B cell (primary cell): ENCODE measurements at regions of chr14 and their contacts with region 1.

Region 1: DNA sequence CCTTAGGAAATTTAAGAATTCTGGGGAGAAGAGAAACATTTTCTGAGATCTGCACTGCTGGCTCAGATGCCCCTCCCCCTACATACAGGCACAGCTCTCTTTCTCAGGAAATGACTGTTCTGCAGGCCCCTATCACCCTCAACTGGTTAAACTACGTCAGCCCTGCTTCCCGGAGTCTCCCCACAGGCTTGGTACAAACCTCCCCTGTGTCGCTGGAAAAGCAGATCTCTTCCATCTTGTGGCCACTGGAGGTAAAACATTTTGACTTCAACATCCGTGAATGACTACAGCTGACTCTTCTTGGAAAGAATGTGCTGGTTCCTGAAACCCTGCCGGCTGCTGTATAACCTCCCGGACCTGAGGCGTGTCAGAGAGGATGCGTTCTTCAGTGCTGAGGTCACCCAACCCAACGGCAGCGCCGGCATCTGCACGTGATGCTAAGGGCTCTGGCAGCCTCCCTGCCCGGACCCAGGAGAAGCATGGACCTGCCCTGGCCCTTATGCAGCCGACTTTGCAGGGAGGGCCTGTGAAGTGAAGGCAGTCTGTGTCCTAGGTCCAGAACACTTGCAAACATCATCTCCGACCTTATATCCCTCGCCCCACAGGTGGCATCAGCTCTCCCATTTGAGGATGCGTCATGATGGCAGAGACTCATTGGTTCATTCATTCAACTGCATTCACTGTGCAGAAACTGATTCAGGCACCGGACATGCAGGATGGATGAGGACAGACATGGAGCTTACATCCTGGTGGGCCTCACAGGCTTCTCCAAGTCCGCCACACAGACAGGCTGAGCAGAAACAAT is 129.3 kb downstream of the GCH1 start:
- DNase-seq: peak; percentile 66
- ATAC-seq: peak; percentile 7
- H3K4me3 ChIP-seq: no peak overlapping the region
- H3K4me3 Mint-ChIP-seq: no peak overlapping the region
- H3K27ac ChIP-seq: peak overlapping the region in 1 of 2 donors; percentile 28
- H3K27ac Mint-ChIP-seq: peak overlapping the region; percentile 47
- H3K4me1 ChIP-seq: peaks cover 42% of the 10 kb centered on the region in 2 donors
- H3K4me1 Mint-ChIP-seq: peaks cover 35% of the 10 kb centered on the region
- H3K27me3 ChIP-seq: no peaks in the 10 kb centered on the region
- H3K27me3 Mint-ChIP-seq: no peaks in the 10 kb centered on the region
- CTCF ChIP-seq: no peak

Region 2: GRCh38 chr14:54396493-54397335 is 376.7 kb before region 1 on chr14 and contains the start of gene CDKN3:
- CTCF ChIA-PET with region 1: no interaction called
- POLR2A ChIA-PET with region 1: no interaction called
- intact Hi-C with region 1: loop called (anchors 10 kb)
- DNase-seq: peak; percentile 98
- ATAC-seq: peak; percentile 93
- H3K4me3 ChIP-seq: peak within 1 kb of the TSS; percentile 36 to 92 (median 75)
- H3K4me3 Mint-ChIP-seq: peak within 1 kb of the TSS; percentile 85
- H3K27ac ChIP-seq: no peak within 1 kb of the TSS
- H3K27ac Mint-ChIP-seq: peak within 1 kb of the TSS; percentile 70
- H3K4me1 ChIP-seq: peaks cover 0 to 13% of the 10 kb centered on the region in 2 donors
- H3K4me1 Mint-ChIP-seq: peaks cover 18% of the 10 kb centered on the region
- H3K27me3 ChIP-seq: no peaks in the 10 kb centered on the region
- H3K27me3 Mint-ChIP-seq: no peaks in the 10 kb centered on the region
- CTCF ChIP-seq: peak; percentile 48
- total RNA-seq, gene CDKN3: 0.42 and 0.87 TPM in 2 replicates

Region 3: DNA sequence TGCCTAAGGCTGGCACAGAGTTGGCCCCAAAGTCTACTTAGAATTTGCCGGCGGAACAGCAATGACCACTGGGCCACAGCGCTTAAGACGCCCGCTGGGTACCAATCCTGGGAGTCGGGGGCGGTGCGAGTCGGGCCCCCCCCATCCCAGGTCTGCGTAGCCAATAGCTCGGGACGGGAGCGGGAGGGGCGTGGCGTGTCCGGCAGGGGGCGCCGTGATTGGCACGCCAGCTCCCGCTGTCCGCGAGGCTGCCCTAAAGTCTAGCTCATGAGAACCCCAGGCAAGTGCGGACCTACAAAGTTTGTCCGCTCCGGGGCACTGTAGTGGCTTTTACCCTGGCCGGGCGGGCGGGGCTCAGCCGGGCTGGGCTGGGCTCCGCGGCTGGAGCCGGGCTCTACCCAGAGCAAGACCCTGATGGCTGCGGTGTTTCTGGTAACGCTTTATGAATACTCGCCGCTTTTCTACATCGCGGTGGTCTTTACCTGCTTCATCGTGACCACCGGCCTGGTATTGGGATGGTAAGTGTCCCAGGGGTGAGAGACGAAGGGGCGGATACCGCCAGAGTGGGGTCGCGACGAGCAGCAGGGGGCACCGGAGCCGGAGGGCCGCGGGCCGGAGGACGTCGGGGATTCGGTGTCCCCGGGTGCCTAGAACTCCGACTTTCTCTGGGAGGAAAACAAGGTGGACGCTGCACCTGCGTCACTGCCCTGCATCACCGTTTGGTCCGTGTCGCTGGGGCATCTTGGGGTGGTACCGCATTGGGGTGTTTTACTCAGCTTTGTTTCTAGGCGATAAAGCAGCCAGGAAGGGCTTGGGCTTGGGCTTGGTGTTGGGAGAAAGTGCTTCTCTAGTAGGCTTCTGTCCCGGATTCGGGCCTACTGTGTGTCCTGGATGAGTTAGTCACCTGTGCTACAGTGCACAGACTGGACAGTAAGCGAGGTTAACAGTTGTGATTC is 263.5 kb before region 1 on chr14 and contains the start of gene CGRRF1:
- CTCF ChIA-PET with region 1: interaction called, 4 read pairs
- POLR2A ChIA-PET with region 1: no interaction called
- intact Hi-C with region 1: loop called (anchors 10 kb)
- DNase-seq: peak; percentile 98
- ATAC-seq: peak; percentile 98
- H3K4me3 ChIP-seq: peak within 1 kb of the TSS; percentile 79 to 99 (median 96)
- H3K4me3 Mint-ChIP-seq: peak within 1 kb of the TSS; percentile 98
- H3K27ac ChIP-seq: peak within 1 kb of the TSS; percentile 81
- H3K27ac Mint-ChIP-seq: peak within 1 kb of the TSS; percentile 94
- H3K4me1 ChIP-seq: peaks cover 21 to 25% of the 10 kb centered on the region in 2 donors
- H3K4me1 Mint-ChIP-seq: peaks cover 44% of the 10 kb centered on the region
- H3K27me3 ChIP-seq: no peaks in the 10 kb centered on the region
- H3K27me3 Mint-ChIP-seq: no peaks in the 10 kb centered on the region
- CTCF ChIP-seq: peak; percentile 57
- total RNA-seq, gene CGRRF1: 15.8 and 17.9 TPM in 2 replicates

Region 4: GRCh38 chr14:54730156-54730961 is 43.0 kb before region 1 on chr14:
- CTCF ChIA-PET with region 1: interaction called, 20 read pairs
- POLR2A ChIA-PET with region 1: no interaction called
- intact Hi-C with region 1: loop called (anchors 2 kb)
- DNase-seq: peak; percentile 78
- ATAC-seq: peak; percentile 97
- H3K4me3 ChIP-seq: peak overlapping the region in 4 of 5 experiments; percentile 1 to 48 (median 39)
- H3K4me3 Mint-ChIP-seq: peak overlapping the region; percentile 82
- H3K27ac ChIP-seq: peak overlapping the region; percentile 45 to 71
- H3K27ac Mint-ChIP-seq: peak overlapping the region; percentile 89
- H3K4me1 ChIP-seq: peaks cover 15 to 20% of the 10 kb centered on the region in 2 donors
- H3K4me1 Mint-ChIP-seq: peaks cover 18% of the 10 kb centered on the region
- H3K27me3 ChIP-seq: no peaks in the 10 kb centered on the region
- H3K27me3 Mint-ChIP-seq: no peaks in the 10 kb centered on the region
- CTCF ChIP-seq: no peak

Region 5: GRCh38 chr14:54805521-54806322 is 32.3 kb after region 1 on chr14:
- CTCF ChIA-PET with region 1: interaction called, 24 read pairs
- POLR2A ChIA-PET with region 1: no interaction called
- intact Hi-C with region 1: loop called (anchors 1 kb)
- DNase-seq: peak; percentile 84
- ATAC-seq: peak; percentile 86
- H3K4me3 ChIP-seq: no peak overlapping the region
- H3K4me3 Mint-ChIP-seq: no peak overlapping the region
- H3K27ac ChIP-seq: no peak overlapping the region
- H3K27ac Mint-ChIP-seq: no peak overlapping the region
- H3K4me1 ChIP-seq: peaks cover 5 to 7% of the 10 kb centered on the region in 2 donors
- H3K4me1 Mint-ChIP-seq: peaks cover 6% of the 10 kb centered on the region
- H3K27me3 ChIP-seq: peaks cover 0 to 6% (median 0%) of the 10 kb centered on the region in 4 experiments
- H3K27me3 Mint-ChIP-seq: peaks cover 20% of the 10 kb centered on the region
- CTCF ChIP-seq: peak; percentile 94

Region 6: DNA sequence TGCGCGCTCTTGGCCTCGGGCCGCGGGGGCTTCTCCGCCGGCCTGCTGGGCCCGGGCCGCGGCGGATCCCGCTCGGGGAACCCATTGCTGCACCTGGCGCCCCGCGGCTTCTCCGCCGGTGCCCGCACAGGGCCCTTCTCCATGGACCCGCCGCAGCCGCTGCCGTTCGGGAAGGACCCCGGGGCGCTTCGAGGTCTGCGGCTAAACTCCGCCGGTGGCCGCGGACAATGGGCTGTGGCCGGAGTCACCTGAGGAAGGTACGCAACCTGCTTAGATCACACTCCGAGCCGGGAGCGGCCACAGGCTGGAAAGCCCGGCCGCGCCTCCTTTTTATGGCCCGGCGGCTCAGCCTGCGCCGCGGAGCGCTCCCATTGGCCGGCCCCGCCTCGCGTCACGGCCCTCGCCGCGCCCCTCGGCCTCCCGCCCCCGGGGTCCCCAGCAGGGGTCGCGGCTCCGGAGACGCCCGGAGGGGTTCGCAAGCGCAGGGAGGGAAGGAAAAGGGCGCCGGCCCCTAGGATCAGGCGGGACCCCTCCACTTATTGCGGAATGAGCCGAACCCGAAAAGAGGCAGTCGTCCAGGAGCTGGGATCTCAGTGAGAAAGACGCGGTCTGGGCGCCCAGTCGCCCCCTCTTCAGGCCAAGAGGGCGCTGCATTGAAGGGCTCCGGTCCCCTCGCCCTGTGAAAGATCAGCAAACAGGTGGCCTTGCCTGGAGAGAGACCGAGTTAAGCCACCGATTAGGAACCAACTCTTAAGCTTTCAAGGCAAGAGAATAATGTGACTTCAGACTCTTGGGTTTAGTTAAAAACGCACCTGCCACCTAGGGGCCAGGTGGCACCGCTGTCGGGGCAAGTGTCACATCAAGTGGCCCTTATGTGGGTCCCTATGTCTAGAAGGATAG is 129.4 kb after region 1 on chr14 and contains the start of gene GCH1:
- CTCF ChIA-PET with region 1: interaction called, 9 read pairs
- POLR2A ChIA-PET with region 1: interaction called, 8 read pairs
- intact Hi-C with region 1: loop called (anchors 5 kb)
- DNase-seq: peak; percentile 92
- ATAC-seq: peak; percentile 87
- H3K4me3 ChIP-seq: peak within 1 kb of the TSS; percentile 50 to 92 (median 83)
- H3K4me3 Mint-ChIP-seq: peak within 1 kb of the TSS; percentile 91
- H3K27ac ChIP-seq: peak within 1 kb of the TSS; percentile 83 to 90
- H3K27ac Mint-ChIP-seq: peak within 1 kb of the TSS; percentile 92
- H3K4me1 ChIP-seq: peaks cover 9 to 16% of the 10 kb centered on the region in 2 donors
- H3K4me1 Mint-ChIP-seq: peaks cover 18% of the 10 kb centered on the region
- H3K27me3 ChIP-seq: no peaks in the 10 kb centered on the region
- H3K27me3 Mint-ChIP-seq: no peaks in the 10 kb centered on the region
- CTCF ChIP-seq: peak; percentile 85
- total RNA-seq, gene GCH1: 23.7 and 24.6 TPM in 2 replicates